ENCODE measurements at regions of chr1 and their contacts with region 1.

Region 1: GRCh38 chr1:181424786-181425403 is 58.4 kb upstream of the CACNA1E start:
- DNase-seq: peak; percentile 57
- ATAC-seq: peak; percentile 79
- H3K4me3 ChIP-seq: peak overlapping the region in 1 of 2 experiments; percentile 26; a peak in 1 of 4 replicates
- H3K27ac ChIP-seq: no peak overlapping the region
- H3K4me1 ChIP-seq: no peaks in the 10 kb centered on the region
- H3K27me3 ChIP-seq: peaks cover 6% of the 10 kb centered on the region
- CTCF ChIP-seq: peak; percentile 99

Region 2: GRCh38 chr1:180988253-180988752 is 436.6 kb before region 1 on chr1:
- CTCF ChIA-PET with region 1: no interaction called
- POLR2A ChIA-PET with region 1: no interaction called
- in situ Hi-C with region 1: no loop called
- intact Hi-C with region 1: no loop called
- DNase-seq: no peak
- ATAC-seq: no peak
- H3K4me3 ChIP-seq: no peak overlapping the region
- H3K27ac ChIP-seq: no peak overlapping the region
- H3K4me1 ChIP-seq: no peaks in the 10 kb centered on the region
- H3K27me3 ChIP-seq: no peaks in the 10 kb centered on the region
- CTCF ChIP-seq: no peak

Region 3: GRCh38 chr1:181189691-181190363 is 235.1 kb before region 1 on chr1:
- CTCF ChIA-PET with region 1: interaction called, 14 read pairs
- POLR2A ChIA-PET with region 1: no interaction called
- in situ Hi-C with region 1: no loop called
- intact Hi-C with region 1: loop called (anchors 1 kb)
- DNase-seq: peak; percentile 17
- ATAC-seq: peak; percentile 94
- H3K4me3 ChIP-seq: peak overlapping the region in 1 of 2 experiments; percentile 26; a peak in 1 of 4 replicates
- H3K27ac ChIP-seq: no peak overlapping the region
- H3K4me1 ChIP-seq: no peaks in the 10 kb centered on the region
- H3K27me3 ChIP-seq: peaks cover 4% of the 10 kb centered on the region; the same call in 1 of the 2 replicates
- CTCF ChIP-seq: peak; percentile 100